ENCODE measurements at regions of chr2 and their contacts with region 1.

Region 1: DNA sequence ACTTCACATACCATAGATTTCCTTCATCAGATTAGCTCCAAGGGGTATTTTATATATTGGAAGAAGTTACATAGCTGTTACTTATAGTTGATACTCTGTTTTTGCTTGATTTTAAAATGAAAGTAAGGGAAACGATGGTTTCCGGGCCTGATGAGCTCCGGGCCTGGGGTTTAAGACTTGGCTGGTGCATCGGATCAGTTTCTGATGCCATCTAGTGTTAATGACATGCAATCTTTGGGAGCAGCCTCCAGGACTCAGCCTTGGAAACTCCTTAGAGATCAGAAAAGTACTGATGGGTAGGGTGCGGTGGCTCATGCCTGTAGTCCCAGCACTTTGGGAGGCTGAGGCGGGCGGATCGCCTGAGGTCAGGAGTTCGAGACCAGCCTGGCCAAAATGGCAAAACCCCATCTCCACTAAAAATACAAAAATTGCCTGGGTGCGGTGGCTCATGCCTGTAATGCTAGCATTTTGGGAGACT is 47.1 kb upstream of the CNOT11 start:
- DNase-seq: peak; percentile 54
- ATAC-seq: peak; percentile 86
- H3K4me3 ChIP-seq: peak overlapping the region in 1 of 5 experiments; percentile 41
- H3K4me3 Mint-ChIP-seq: peak overlapping the region; percentile 66
- H3K27ac ChIP-seq: no peak overlapping the region
- H3K27ac Mint-ChIP-seq: peak overlapping the region; percentile 26
- H3K4me1 ChIP-seq: no peaks in the 10 kb centered on the region
- H3K4me1 Mint-ChIP-seq: peaks cover 7% of the 10 kb centered on the region
- H3K27me3 ChIP-seq: no peaks in the 10 kb centered on the region
- H3K27me3 Mint-ChIP-seq: peaks cover 4% of the 10 kb centered on the region
- CTCF ChIP-seq: peak; percentile 27

Region 2: DNA sequence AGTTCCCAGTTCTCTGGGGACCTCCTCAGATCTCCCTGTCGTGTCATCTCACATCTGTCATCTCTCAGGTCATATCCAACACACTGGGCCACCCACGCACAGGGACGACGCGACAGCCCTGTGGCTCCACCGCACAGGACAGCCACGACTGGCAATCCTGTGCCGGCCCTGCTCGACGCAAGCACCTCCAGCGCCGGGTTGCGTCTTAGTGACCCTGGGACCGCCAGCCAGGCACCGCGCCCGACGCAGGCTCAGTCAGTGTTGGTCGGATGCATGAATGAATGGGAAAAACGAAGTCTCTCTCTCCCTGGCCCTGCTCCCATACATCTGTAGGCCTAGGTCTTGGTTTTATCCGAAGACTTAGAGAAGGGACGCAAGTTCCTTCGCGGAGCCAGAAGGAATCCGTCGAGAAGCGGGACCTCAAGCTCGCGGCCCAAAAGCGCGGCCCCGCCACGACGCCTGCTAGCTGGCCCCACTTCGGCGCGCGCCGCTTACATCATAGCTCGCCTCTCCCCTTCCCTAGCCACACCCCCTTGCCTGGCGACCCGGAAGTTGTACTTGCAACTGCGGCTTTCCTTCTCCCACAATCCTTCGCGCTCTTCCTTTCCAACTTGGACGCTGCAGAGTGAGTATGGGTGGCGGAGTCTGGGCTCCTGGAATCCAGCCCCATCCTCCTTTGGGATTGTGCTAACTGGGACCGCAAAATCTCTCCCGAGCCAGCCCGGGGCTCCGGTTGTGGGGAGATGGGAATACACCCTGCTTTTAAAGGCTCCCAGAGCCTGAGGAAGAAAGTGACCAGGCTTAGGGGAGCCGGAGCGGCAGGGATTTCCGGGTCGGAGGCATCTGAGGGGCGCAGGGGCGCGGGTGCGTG is 203.6 kb before region 1 on chr2 and contains the start of gene RPL31:
- CTCF ChIA-PET with region 1: interaction called, 10 read pairs
- POLR2A ChIA-PET with region 1: no interaction called
- intact Hi-C with region 1: no loop called
- DNase-seq: peak; percentile 95
- ATAC-seq: peak; percentile 97
- H3K4me3 ChIP-seq: peak within 1 kb of the TSS; percentile 80 to 99 (median 92)
- H3K4me3 Mint-ChIP-seq: peak within 1 kb of the TSS; percentile 88
- H3K27ac ChIP-seq: peak within 1 kb of the TSS; percentile 84 to 91
- H3K27ac Mint-ChIP-seq: peak within 1 kb of the TSS; percentile 96
- H3K4me1 ChIP-seq: peaks cover 15 to 21% of the 10 kb centered on the region in 2 donors
- H3K4me1 Mint-ChIP-seq: peaks cover 40% of the 10 kb centered on the region
- H3K27me3 ChIP-seq: no peaks in the 10 kb centered on the region
- H3K27me3 Mint-ChIP-seq: no peaks in the 10 kb centered on the region
- CTCF ChIP-seq: no peak
- total RNA-seq, gene RPL31: 1,595 and 1,767 TPM in 2 replicates

Region 3: GRCh38 chr2:101030863-101031554 is 174.6 kb before region 1 on chr2:
- CTCF ChIA-PET with region 1: interaction called, 87 read pairs
- POLR2A ChIA-PET with region 1: no interaction called
- intact Hi-C with region 1: loop called (anchors 1 kb)
- DNase-seq: no peak
- ATAC-seq: no peak
- H3K4me3 ChIP-seq: no peak overlapping the region
- H3K4me3 Mint-ChIP-seq: no peak overlapping the region
- H3K27ac ChIP-seq: no peak overlapping the region
- H3K27ac Mint-ChIP-seq: no peak overlapping the region
- H3K4me1 ChIP-seq: no peaks in the 10 kb centered on the region
- H3K4me1 Mint-ChIP-seq: no peaks in the 10 kb centered on the region
- H3K27me3 ChIP-seq: peaks cover 0 to 3% (median 0%) of the 10 kb centered on the region in 4 experiments
- H3K27me3 Mint-ChIP-seq: peaks cover 4% of the 10 kb centered on the region
- CTCF ChIP-seq: no peak

Region 4: GRCh38 chr2:101151141-101151858 is 54.3 kb before region 1 on chr2 and contains the start of gene TBC1D8:
- CTCF ChIA-PET with region 1: interaction called, 42 read pairs
- POLR2A ChIA-PET with region 1: no interaction called
- intact Hi-C with region 1: loop called (anchors 2 kb)
- DNase-seq: peak; percentile 66
- ATAC-seq: peak; percentile 85
- H3K4me3 ChIP-seq: peak within 1 kb of the TSS; percentile 51 to 66 (median 57)
- H3K4me3 Mint-ChIP-seq: peak within 1 kb of the TSS; percentile 80
- H3K27ac ChIP-seq: no peak within 1 kb of the TSS
- H3K27ac Mint-ChIP-seq: peak within 1 kb of the TSS; percentile 46
- H3K4me1 ChIP-seq: peaks cover 23 to 29% of the 10 kb centered on the region in 2 donors
- H3K4me1 Mint-ChIP-seq: peaks cover 27% of the 10 kb centered on the region
- H3K27me3 ChIP-seq: peaks cover 0 to 26% (median 19%) of the 10 kb centered on the region in 4 experiments
- H3K27me3 Mint-ChIP-seq: peaks cover 24% of the 10 kb centered on the region
- CTCF ChIP-seq: no peak
- total RNA-seq, gene TBC1D8: 15.7 and 18.8 TPM in 2 replicates

Region 5: DNA sequence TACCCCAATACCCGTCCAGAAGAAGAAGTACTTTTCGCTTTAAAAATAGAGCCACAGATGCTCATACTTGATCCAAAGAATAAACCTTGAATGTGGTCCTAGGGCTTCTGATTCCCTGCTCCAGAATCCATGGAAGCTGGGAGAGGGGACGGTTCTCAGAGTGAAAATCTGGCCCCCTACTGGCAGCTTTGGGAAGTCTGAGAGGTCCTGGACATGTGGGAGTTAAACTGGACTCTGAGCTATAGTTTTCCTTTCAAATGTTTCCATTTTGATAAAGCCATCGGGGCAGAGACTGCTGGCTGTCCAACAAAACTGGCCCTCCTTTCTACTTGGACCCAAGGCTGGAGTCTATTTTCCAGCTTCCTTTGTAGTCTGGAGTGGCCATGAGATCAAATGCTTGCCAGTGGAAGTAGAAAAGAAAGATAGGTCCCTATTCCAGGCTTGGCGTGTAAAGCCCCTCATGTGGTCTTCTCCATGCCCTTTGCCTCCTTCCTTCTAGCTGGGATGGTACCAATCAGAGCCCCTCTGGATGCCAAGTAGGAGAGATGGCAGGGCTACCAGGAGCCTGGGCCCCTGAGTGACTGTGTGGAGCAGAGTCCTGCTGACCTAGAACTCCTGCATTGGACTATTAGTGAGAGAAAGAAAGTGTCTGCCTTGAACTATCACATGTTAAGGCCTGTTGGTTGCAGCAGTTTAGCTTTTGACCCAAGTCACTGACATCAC is 16.7 kb before region 1 on chr2:
- CTCF ChIA-PET with region 1: interaction called, 34 read pairs
- POLR2A ChIA-PET with region 1: no interaction called
- intact Hi-C with region 1: no loop called
- DNase-seq: no peak
- ATAC-seq: no peak
- H3K4me3 ChIP-seq: no peak overlapping the region
- H3K4me3 Mint-ChIP-seq: no peak overlapping the region
- H3K27ac ChIP-seq: no peak overlapping the region
- H3K27ac Mint-ChIP-seq: no peak overlapping the region
- H3K4me1 ChIP-seq: no peaks in the 10 kb centered on the region
- H3K4me1 Mint-ChIP-seq: peaks cover 4% of the 10 kb centered on the region
- H3K27me3 ChIP-seq: peaks cover 0 to 3% (median under 1%) of the 10 kb centered on the region in 4 experiments
- H3K27me3 Mint-ChIP-seq: peaks cover 8% of the 10 kb centered on the region
- CTCF ChIP-seq: no peak

Measured in B cell (primary cell).